Spleen (tissue), 13 donors: ENCODE measurements at regions of chr3 and their contacts with region 1.

Region 1: DNA sequence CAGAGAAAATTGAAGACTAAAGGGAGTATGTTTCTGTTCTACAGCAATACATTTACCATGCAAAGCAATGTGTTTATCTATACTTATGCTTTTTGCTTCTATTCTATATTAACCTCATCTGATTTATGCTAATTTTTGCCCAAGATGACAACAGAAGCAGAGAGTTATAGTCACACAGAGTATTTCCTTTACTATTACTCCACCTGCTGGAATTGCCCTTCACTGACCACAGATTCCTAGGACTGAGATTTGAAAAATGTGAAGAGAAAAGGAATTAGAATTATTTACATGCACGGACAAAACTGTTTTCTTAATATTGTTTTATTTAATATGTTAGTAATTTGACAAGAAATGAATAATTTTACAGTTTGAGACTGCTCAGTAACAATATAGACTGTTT is 745.6 kb downstream of the VGLL3 start:
- DNase-seq: no peak
- H3K4me3 ChIP-seq: no peak overlapping the region
- H3K27ac ChIP-seq: no peak overlapping the region
- H3K4me1 ChIP-seq: no peaks in the 10 kb centered on the region
- H3K27me3 ChIP-seq: no peaks in the 10 kb centered on the region
- CTCF ChIP-seq: peak in 5 of 11 experiments; percentile 27 to 54 (median 46)
- POLR2A ChIP-seq: no peak

Region 2: DNA sequence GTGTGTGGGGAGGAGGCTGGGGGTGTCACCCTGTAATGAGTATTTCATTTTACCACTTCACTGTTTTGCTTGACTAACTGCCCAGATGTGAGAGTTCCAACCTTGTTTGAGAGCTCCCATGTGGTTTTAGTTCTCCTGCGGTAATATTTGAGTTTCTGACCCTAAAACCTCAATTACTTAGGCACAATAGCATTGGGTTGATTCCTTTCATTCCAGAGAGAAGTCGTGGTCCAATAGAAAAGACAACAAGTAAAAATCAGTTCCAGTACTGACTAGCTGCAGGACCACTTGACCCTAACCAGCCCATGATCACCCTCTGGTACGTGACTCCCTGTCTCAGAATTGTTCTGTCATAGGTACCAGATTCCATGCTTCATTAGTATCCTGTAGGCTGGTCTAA is 656.2 kb before region 1 on chr3:
- intact Hi-C with region 1: no loop called
- DNase-seq: no peak
- H3K4me3 ChIP-seq: no peak overlapping the region
- H3K27ac ChIP-seq: no peak overlapping the region
- H3K4me1 ChIP-seq: no peaks in the 10 kb centered on the region
- H3K27me3 ChIP-seq: no peaks in the 10 kb centered on the region
- CTCF ChIP-seq: no peak
- POLR2A ChIP-seq: no peak

Region 3: DNA sequence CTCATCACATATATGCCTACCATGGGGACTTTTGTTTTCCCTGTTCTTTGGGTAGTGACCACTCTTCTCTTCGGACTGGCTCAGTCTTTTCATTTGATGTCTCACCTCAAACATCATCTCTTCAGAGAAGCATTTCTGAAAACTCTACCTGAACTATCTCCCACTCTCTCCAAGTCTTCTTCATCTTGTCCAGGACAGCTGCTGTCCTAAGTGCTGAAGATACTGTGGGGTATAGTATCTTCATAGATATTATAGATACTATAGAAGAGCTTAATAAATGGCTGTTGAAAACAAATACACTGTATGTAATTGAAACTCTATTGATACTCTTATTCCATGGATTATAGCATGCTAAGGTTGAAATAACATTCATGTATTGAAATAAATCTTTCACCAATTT is 614.3 kb before region 1 on chr3:
- intact Hi-C with region 1: no loop called
- DNase-seq: no peak
- H3K4me3 ChIP-seq: no peak overlapping the region
- H3K27ac ChIP-seq: no peak overlapping the region
- H3K4me1 ChIP-seq: no peaks in the 10 kb centered on the region
- H3K27me3 ChIP-seq: no peaks in the 10 kb centered on the region
- CTCF ChIP-seq: no peak
- POLR2A ChIP-seq: no peak

Region 4: DNA sequence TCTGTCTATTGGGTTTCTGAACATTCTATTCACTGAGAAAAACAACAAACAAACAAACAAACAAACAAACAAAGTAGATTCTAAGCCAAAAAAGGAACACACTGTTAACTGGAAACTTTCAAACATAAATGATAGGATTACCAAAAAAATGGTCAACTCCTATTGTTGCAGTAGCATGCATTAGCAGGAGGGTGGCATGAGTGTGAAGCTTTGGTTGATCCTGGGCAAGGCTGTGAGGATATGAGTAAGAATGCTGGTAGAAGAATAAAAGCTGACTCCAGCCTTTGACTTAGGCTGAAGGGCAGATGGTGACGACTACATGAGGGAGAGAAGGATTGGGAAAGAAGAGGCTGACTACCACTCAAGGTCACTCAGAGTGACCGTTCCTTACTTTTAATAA is 64.7 kb before region 1 on chr3:
- intact Hi-C with region 1: loop called (anchors 10 kb)
- DNase-seq: no peak
- H3K4me3 ChIP-seq: no peak overlapping the region
- H3K27ac ChIP-seq: no peak overlapping the region
- H3K4me1 ChIP-seq: no peaks in the 10 kb centered on the region
- H3K27me3 ChIP-seq: no peaks in the 10 kb centered on the region
- CTCF ChIP-seq: peak in 6 of 11 experiments; percentile 13 to 59 (median 28)
- POLR2A ChIP-seq: no peak

Region 5: GRCh38 chr3:86451749-86452148 is 206.4 kb after region 1 on chr3:
- intact Hi-C with region 1: no loop called
- DNase-seq: no peak
- H3K4me3 ChIP-seq: no peak overlapping the region
- H3K27ac ChIP-seq: no peak overlapping the region
- H3K4me1 ChIP-seq: no peaks in the 10 kb centered on the region
- H3K27me3 ChIP-seq: no peaks in the 10 kb centered on the region
- CTCF ChIP-seq: no peak
- POLR2A ChIP-seq: no peak